ENCODE measurements at regions of chr15 and their contacts with region 1.

Region 1: DNA sequence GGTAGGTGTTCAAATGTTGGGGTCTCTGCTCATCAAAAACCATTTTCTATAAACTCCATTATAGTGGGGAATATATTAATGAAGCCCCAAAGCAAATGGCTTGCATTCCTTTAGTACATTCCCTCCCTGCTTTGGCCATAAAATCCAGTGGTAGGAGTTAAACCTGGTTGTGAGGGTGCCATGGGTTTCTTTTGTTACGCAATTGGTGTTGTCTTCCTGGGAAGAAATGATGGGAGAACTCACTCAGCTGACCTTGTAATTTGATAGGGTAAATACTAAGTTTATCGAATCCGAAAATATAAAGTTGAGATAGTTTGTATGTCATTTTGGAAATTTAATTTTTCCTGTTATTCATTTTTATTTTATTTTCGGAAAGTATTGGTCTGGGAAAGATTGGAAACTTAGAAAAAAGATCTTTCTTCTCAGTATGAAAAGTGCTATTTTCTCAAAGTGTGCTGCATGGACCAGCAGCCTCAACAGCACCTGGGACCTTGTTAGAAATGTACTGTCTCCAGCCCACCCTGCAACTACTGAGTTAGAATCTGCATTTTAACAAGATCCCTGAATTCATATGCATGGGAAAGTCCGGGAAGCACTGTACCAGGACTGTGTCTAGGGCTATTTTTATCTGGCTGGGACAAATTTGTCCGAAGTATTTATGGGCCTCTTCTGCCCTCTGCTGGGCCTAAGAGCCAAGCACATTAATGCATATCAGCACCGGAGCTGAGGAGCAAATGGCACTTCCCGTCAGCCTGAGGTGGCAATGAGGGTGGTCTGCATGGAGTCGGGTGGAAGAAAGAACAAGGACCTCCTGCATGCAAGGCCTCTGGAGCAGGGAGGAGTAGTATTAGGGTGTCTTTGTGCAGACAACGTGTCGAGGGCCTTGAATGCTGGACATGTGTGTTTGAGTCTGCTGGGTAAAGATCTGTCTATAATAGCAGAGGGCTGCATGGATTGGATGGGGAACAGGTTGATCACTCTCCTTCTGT is 54.7 kb downstream of the FAM81A start:
- DNase-seq: peak; percentile 83

Region 2: GRCh38 chr15:58980351-58980939 is 512.2 kb before region 1 on chr15:
- intact Hi-C with region 1: loop called (anchors 5 kb)
- DNase-seq: no peak

Region 3: DNA sequence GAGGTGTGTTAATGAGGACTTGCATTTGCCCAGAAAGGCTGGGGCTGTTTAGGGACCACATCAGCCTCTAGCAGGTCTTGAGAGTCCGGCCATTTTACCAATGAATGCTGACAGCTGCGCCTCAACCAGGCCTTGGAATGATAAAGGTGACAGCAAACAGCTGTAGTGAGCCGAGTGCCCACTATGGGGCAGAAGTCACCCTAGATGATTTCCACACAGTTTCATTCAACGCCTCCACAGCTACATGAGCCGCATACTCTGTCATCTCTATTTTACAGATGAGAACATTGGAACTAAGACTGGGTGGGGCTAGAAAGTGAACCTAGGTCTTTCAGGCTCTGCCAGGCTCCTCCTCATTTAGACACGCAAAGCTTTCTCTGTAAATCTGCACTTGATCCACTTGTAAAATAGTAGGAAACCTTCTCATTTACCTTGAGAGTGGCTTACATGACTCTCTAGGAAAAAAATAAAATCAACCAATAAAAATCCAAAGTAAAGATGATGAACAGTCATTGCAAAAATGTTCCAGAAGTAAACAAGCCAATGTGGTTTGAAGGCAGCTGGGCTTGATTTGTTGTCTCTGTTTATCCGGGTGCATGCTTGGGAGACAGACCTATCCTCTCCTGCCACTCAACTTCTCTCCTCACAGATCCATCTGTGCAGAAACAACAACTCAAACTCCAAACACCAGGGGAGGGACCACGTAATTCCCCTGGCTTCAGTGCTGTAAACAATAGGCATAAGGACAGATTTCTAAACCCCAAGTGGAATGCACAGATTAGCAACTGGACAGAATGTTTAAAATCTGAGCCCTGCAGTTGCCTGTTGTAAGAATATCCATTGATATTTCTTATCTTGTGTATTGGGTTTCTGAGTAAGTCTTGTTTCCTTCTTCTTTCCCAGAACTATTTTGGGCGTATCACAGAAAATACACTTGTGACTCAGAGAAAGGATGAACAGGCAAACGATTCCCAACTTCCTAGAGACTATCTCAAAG is 317.6 kb before region 1 on chr15:
- intact Hi-C with region 1: loop called (anchors 2 kb)
- DNase-seq: no peak

Region 4: GRCh38 chr15:59247364-59247763 is 245.3 kb before region 1 on chr15:
- intact Hi-C with region 1: loop called (anchors 2 kb)
- DNase-seq: no peak